Posterior cingulate gyrus (tissue), 11 donors: ENCODE measurements at regions of chr19 and their contacts with region 1.

Region 1: DNA sequence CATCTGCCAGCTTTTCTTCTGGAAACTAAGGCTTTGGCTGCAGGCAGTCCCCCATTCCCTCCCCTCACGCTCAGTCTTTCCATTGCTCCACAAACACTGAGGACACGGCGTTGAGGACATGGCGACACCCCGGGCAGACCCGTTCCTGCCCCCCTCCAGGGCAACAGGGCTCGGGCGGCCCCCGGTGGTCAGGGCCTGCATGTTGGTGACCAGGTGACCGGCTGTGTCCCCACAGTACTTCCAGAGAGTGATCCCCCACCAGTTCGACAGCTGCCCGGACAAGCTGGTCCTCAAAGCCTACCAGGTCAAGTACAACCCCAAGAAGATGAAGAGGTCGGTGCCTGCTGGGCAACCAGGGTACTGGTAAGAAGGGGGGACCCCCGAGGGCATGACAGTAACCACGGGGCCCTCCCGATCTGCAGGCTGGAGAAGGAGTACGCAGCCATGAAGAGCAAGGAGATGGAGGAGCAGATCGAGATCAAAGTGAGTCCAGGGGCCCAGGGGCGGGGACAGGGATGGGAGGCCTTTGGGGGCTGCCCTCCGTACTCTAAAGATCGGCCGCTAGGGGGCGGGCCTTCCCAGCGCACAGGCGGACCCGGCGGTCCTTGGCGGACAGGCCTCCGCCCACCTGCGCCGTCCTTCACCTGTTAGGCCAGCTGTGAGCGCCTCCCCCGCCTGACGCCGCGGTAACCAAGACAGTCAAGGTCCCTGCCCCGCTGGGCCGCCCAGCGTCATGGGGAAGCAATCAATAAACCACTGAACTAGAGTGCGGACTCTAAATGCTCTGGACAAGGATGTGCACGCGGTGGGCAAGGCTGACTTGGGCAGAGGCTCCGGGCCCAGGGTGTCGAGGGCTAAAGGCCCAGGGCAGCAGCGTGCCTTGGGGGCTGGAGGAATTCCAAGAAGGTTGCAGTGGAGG is 21.1 kb downstream of the PRR36 start:
- DNase-seq: peak in 6 of 10 donors; percentile 69 to 96 (median 75)

Region 2: DNA sequence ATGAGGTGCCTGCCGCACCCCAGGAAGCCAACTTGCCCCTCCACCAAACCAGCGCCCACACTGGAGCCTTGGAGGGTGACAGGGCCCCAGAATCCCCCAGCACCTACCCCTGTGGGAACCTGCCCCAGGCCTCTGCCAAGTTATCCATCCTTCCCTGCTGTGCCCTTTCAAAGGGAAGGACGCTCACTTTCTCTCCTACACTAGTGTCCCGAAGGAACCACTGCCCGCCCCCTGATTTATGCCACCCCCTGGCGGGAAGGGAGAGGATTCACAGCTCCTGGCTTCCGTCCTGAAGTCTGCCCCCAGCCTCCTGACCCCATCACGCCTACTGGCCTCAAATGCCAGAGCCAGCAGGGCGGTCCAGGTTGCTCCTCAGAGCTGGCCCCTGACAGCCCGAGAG is 21.7 kb before region 1 on chr19:
- intact Hi-C with region 1: loop called (anchors 1 kb)
- DNase-seq: peak in 6 of 10 donors; percentile 27 to 91 (median 67)

Region 3: DNA sequence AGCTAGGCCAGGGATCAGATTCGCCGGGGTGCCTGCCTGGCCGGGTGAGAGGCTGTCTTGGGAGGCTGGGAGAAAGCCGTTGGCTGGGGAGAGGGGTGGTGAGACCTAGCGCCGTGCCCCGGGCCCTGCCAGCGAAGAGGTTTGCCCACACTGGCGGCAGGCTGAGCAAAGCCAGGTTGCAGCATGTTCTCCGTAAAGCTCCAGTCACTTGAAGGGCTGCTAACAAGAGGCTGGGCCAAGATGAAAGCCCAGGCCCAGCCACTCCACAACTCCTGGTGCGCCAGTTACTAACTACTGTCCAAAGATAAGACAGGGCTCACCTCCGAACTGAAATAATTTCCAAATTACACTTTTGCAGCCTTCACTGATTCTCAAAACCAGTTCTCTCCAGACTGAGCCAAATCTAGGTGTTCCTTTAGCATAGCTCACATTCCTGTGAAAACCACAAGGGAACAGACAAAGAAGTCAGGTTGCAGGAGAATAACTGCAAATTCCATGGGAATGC is 136.0 kb after region 1 on chr19:
- intact Hi-C with region 1: no loop called
- DNase-seq: peak in 1 of 10 donors; percentile 50